ENCODE measurements at regions of chr18 and their contacts with region 1.

Region 1: GRCh38 chr18:35478520-35479435 is 19.0 kb downstream of the INO80C start:
- DNase-seq: peak; percentile 89
- ATAC-seq: peak; percentile 97
- H3K4me3 ChIP-seq: peak overlapping the region in 1 of 2 experiments; percentile 7; a peak in 1 of 4 replicates
- H3K27ac ChIP-seq: peak overlapping the region; percentile 81
- H3K4me1 ChIP-seq: peaks cover 36% of the 10 kb centered on the region
- H3K27me3 ChIP-seq: no peaks in the 10 kb centered on the region
- CTCF ChIP-seq: peak; percentile 20

Region 2: DNA sequence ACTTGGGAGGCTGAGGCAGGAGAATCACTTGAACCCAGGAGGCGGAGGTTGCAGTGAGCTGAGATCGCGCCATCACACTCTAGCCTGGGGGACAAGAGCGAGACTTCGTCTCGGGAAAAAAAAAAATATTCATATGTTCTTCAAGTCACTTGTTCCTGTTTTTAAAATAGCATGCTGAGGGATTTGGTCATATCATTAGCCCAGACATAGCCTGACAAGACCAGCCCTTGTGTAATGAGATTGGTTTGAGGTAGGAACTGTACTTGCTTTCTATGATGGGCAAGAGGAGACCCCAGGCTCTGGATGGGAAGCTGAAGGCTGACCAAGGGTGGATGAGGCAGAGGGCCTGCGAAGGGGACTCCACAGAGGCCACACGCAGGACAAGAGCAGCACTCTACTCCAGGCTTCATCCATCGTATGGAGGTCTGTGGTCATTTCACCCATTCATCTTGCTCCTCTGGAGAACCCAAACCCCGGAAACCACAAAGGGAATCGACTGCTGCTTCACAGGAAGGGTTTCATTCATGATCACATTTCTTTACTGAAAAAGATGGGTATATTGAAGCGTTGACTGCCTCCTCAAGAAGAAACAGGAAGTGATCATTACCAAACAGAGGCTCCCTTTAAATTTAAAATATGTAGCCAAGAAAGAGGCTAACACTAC is 325.0 kb before region 1 on chr18:
- CTCF ChIA-PET with region 1: no interaction called
- POLR2A ChIA-PET with region 1: no interaction called
- in situ Hi-C with region 1: no loop called
- intact Hi-C with region 1: no loop called
- DNase-seq: no peak
- ATAC-seq: no peak
- H3K4me3 ChIP-seq: no peak overlapping the region
- H3K27ac ChIP-seq: no peak overlapping the region
- H3K4me1 ChIP-seq: no peaks in the 10 kb centered on the region
- H3K27me3 ChIP-seq: no peaks in the 10 kb centered on the region
- CTCF ChIP-seq: no peak

Region 3: GRCh38 chr18:35164133-35164532 is 314.6 kb before region 1 on chr18:
- CTCF ChIA-PET with region 1: no interaction called
- POLR2A ChIA-PET with region 1: no interaction called
- in situ Hi-C with region 1: no loop called
- intact Hi-C with region 1: no loop called
- DNase-seq: no peak
- ATAC-seq: no peak
- H3K4me3 ChIP-seq: no peak overlapping the region
- H3K27ac ChIP-seq: no peak overlapping the region
- H3K4me1 ChIP-seq: no peaks in the 10 kb centered on the region
- H3K27me3 ChIP-seq: no peaks in the 10 kb centered on the region
- CTCF ChIP-seq: no peak

Region 4: GRCh38 chr18:35443434-35443833 is 35.3 kb before region 1 on chr18:
- CTCF ChIA-PET with region 1: no interaction called
- POLR2A ChIA-PET with region 1: no interaction called
- in situ Hi-C with region 1: no loop called
- intact Hi-C with region 1: no loop called
- DNase-seq: no peak
- ATAC-seq: no peak
- H3K4me3 ChIP-seq: no peak overlapping the region
- H3K27ac ChIP-seq: no peak overlapping the region
- H3K4me1 ChIP-seq: no peaks in the 10 kb centered on the region; the same call in 1 of the 2 replicates
- H3K27me3 ChIP-seq: no peaks in the 10 kb centered on the region
- CTCF ChIP-seq: no peak

Region 5: GRCh38 chr18:35497370-35498197 is 18.8 kb after region 1 on chr18 and contains the start of gene INO80C:
- CTCF ChIA-PET with region 1: no interaction called
- POLR2A ChIA-PET with region 1: interaction called, 11 read pairs
- in situ Hi-C with region 1: no loop called
- intact Hi-C with region 1: no loop called
- DNase-seq: peak; percentile 70
- ATAC-seq: peak; percentile 96
- H3K4me3 ChIP-seq: peak within 1 kb of the TSS; percentile 62 to 74
- H3K27ac ChIP-seq: peak within 1 kb of the TSS; percentile 96
- H3K4me1 ChIP-seq: peaks cover 34% of the 10 kb centered on the region
- H3K27me3 ChIP-seq: no peaks in the 10 kb centered on the region
- CTCF ChIP-seq: no peak
- total RNA-seq, gene INO80C: 25.8 TPM